Heart left ventricle (tissue), 16 donors: ENCODE measurements at regions of chr11 and their contacts with region 1.

Region 1: GRCh38 chr11:69642913-69643632 is 2.1 kb downstream of the CCND1 start:
- DNase-seq: peak; percentile 82 to 93 (median 85)
- ATAC-seq: peak; percentile 23 to 68 (median 55)
- H3K4me3 ChIP-seq: peak overlapping the region; percentile 72 to 97 (median 88)
- H3K27ac ChIP-seq: peak overlapping the region; percentile 89 to 100 (median 97)
- H3K4me1 ChIP-seq: peaks cover 6 to 74% (median 62%) of the 10 kb centered on the region in 12 donors
- H3K27me3 ChIP-seq: peaks cover 0 to 37% (median 0%) of the 10 kb centered on the region in 9 donors
- CTCF ChIP-seq: peak; percentile 87 to 97 (median 95)
- POLR2A ChIP-seq: peak in 1 of 2 donors; percentile 30

Region 2: DNA sequence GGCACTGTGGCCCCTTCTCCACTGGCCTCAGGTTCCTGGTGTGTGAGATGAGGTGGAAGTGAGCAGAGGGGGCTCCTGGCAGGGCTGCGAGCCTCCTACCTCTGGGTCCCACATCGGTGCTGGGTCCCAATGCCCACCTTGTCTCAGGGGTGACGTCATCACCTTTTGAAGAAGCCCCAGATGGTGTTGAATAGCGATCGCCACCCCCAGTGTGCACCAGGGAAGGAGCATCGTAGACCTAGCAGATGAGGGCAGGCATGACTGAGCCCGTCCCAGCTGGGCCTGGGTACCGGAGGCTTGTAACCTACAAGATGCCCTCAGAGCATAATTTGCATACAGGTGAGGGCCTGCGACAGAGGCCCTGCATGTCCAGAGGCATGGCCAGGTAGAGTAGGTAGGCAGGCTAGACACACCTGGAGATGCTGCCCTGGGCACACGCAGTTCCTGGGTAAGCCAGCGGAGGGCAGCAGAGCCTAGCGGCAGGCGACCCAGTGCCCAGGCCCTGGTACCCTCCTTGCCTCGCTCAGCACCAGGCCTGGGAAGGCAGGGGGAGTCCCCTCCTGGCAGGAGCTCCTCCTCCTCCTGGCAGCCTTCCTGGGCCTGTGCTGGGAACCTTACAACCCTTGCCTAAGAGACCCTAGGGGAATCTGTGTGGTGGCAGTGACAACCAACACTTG is 541.8 kb before region 1 on chr11:
- intact Hi-C with region 1: loop called (anchors 1 to 5 kb)
- DNase-seq: peak; percentile 64 to 85 (median 81)
- ATAC-seq: peak; percentile 72 to 86 (median 83)
- H3K4me3 ChIP-seq: no peak overlapping the region
- H3K27ac ChIP-seq: no peak overlapping the region
- H3K4me1 ChIP-seq: peaks cover 0 to 20% (median 9%) of the 10 kb centered on the region in 12 donors
- H3K27me3 ChIP-seq: no peaks in the 10 kb centered on the region
- CTCF ChIP-seq: peak; percentile 96 to 100 (median 100)
- POLR2A ChIP-seq: no peak

Region 3: GRCh38 chr11:69122642-69123431 is 520.2 kb before region 1 on chr11:
- intact Hi-C with region 1: loop called in 5 of 10 experiments (anchors 5 kb)
- DNase-seq: peak in 4 of 5 donors; percentile 57 to 87 (median 72)
- ATAC-seq: peak; percentile 85 to 92 (median 90)
- H3K4me3 ChIP-seq: peak overlapping the region in 3 of 12 donors; percentile 3 to 10 (median 4)
- H3K27ac ChIP-seq: peak overlapping the region in 11 of 12 donors; percentile 42 to 75 (median 70)
- H3K4me1 ChIP-seq: peaks cover 10 to 27% (median 18%) of the 10 kb centered on the region in 12 donors
- H3K27me3 ChIP-seq: no peaks in the 10 kb centered on the region
- CTCF ChIP-seq: no peak
- POLR2A ChIP-seq: peak in 1 of 2 donors; percentile 21

Region 4: DNA sequence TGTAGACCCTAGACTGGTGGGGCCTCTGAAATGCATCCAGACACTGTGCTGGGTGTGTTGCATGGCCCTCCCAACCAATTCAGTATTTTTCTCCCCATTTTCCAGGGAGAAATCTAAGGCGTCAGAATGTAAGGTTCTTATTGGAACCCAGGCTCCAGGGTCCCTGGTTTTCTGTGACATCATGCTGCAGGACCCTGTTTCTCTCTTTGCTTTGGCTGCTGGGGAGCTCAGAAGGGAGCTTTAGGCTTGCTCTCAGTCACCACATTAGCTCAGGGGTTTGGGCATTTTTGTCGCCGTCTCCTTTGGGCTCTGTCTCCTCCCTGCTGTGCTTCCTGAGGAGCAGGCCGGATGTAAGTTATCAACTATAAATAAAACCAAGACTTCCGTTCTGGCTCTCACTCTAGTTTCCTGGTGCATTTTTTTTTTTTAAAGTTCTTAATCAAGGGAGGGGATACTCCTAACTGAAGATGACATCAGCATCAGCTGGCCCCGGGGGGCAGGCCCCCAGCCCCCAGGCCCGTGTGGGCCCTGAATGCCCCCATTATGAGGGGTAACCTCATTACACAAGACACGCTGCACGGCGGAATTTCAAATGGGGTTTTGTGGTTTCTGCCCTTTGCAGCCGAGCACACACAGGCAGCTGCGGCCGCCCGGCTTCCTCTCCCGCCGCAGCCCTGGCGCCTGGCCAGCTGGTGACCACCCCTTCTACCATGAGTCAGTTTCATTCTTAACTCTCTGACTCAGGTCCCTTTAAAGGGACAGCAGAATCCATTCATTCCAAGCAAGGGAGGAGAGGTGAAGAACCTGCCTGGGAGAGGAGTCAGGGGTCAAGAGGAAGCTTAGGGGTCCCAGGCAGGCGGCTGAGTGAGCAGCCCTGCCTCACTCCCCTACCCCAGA is 345.9 kb before region 1 on chr11:
- intact Hi-C with region 1: loop called (anchors 1 to 5 kb)
- DNase-seq: peak; percentile 94 to 97 (median 95)
- ATAC-seq: peak; percentile 49 to 89 (median 82)
- H3K4me3 ChIP-seq: peak overlapping the region in 9 of 12 donors; percentile 6 to 43 (median 30)
- H3K27ac ChIP-seq: peak overlapping the region in 11 of 12 donors; percentile 70 to 94 (median 81)
- H3K4me1 ChIP-seq: peaks cover 15 to 90% (median 47%) of the 10 kb centered on the region in 12 donors
- H3K27me3 ChIP-seq: no peaks in the 10 kb centered on the region
- CTCF ChIP-seq: no peak
- POLR2A ChIP-seq: no peak

Region 5: GRCh38 chr11:69443138-69443967 is 199.7 kb before region 1 on chr11:
- intact Hi-C with region 1: loop called (anchors 2 to 10 kb)
- DNase-seq: peak; percentile 94 to 96 (median 95)
- ATAC-seq: peak; percentile 87 to 96 (median 93)
- H3K4me3 ChIP-seq: peak overlapping the region in 10 of 12 donors; percentile 29 to 64 (median 50)
- H3K27ac ChIP-seq: peak overlapping the region; percentile 67 to 95 (median 90)
- H3K4me1 ChIP-seq: peaks cover 3 to 47% (median 33%) of the 10 kb centered on the region in 12 donors
- H3K27me3 ChIP-seq: no peaks in the 10 kb centered on the region
- CTCF ChIP-seq: no peak
- POLR2A ChIP-seq: peak in 1 of 2 donors; percentile 70

Region 6: DNA sequence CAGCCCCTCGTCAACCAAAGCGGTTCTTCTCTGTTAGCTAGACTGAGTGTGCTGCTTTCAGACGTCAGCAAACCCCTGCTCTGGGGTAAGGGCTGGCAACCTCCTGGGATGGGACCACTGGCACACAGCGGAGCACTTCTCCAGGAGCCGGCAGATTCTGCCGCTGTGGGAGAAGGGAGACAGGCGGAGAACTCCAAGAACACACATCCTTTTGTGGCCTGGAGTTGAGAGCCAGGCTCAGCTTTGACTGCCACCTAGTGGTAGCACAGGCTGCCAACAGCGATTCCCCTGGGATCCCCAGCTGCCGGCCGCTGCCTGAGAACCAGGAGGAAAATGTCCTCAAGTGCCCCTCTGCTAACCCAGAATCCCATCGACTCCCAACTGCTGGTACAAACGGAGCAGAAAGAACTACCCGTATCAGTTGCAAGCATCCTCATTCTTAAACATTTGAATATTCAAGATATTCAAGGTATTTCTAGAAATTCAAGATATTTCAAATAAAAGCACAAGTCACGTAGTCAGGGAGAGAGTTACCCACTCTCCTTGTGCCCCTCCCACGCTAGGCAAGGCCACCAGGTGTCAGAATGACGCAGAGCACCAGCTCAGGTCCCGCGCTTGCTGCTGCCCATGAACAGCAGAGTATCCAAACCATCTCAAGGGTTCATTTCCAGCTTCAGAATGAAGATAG is 27.2 kb after region 1 on chr11:
- intact Hi-C with region 1: loop called in 1 of 10 experiments (anchors 2 kb)
- DNase-seq: peak; percentile 84 to 89 (median 88)
- ATAC-seq: peak; percentile 53 to 78 (median 70)
- H3K4me3 ChIP-seq: no peak overlapping the region
- H3K27ac ChIP-seq: peak overlapping the region in 4 of 12 donors; percentile 2 to 42 (median 22)
- H3K4me1 ChIP-seq: peaks cover 0 to 32% (median 23%) of the 10 kb centered on the region in 12 donors
- H3K27me3 ChIP-seq: no peaks in the 10 kb centered on the region
- CTCF ChIP-seq: peak; percentile 91 to 99 (median 96)
- POLR2A ChIP-seq: no peak

Region 7: DNA sequence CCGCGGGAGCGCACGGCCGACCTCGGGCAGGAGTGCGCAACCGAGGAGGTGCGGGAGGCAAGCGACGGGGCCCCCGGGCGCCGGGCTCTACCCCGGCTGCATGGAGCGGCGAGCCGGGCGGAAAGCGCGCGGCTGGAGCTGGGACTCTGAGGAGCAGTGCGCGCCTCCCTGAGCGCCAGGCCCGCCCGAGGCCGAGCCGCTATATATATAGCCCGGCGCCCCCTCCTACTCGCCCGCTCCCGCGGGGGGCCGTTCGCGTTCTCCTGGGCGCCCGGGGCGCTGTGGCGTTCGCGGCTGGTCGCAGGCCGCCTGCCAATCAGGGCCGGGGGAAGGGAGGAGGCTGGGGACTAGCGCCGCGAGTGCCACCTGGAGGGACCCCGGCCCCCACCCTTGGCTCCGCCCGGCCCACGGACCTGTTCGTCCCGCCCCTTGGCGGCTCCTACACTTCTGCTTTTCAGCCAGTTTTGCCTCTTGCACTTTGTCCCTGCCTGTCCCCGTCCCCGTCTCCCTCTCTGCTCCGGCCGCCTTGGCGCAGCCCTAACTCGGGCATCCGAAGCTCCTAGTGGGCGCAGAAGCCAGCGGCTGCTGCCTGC is 132.2 kb after region 1 on chr11 and contains the start of gene FGF4:
- intact Hi-C with region 1: no loop called
- DNase-seq: no peak
- ATAC-seq: no peak
- H3K4me3 ChIP-seq: peak within 1 kb of the TSS in 1 of 12 donors; percentile 13
- H3K27ac ChIP-seq: no peak within 1 kb of the TSS
- H3K4me1 ChIP-seq: peaks cover 0 to 18% (median 0%) of the 10 kb centered on the region in 12 donors
- H3K27me3 ChIP-seq: peaks cover 18 to 83% (median 41%) of the 10 kb centered on the region in 9 donors
- CTCF ChIP-seq: no peak
- POLR2A ChIP-seq: no peak
- total RNA-seq, gene FGF4: not detected